OCI-LY7 (cell line): ENCODE measurements at regions of chr1 and their contacts with region 1.

Region 1: DNA sequence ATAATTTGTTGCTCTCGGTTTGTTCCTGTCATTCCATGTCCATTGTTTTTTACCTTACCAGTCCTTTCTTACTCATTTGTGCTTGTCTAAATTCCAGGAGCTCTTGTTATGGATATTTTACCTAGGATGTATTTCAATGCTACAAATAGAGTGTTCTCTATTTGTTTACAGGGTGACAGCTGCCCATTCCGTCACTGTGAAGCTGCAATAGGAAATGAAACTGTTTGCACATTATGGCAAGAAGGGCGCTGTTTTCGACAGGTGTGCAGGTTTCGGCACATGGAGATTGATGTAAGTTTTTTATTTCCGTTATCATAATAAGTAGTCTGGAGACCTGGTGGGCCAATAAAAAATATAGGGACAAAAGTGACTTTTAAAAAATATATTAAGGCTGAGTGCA is 23.0 kb downstream of the ZBED6 start:
- DNase-seq: peak; percentile 89
- H3K4me3 ChIP-seq: peak overlapping the region; percentile 47
- H3K27ac ChIP-seq: peak overlapping the region; percentile 93
- H3K4me1 ChIP-seq: peaks cover 39% of the 10 kb centered on the region
- CTCF ChIP-seq: peak; percentile 32; the same call in 1 of the 2 replicates

Region 2: DNA sequence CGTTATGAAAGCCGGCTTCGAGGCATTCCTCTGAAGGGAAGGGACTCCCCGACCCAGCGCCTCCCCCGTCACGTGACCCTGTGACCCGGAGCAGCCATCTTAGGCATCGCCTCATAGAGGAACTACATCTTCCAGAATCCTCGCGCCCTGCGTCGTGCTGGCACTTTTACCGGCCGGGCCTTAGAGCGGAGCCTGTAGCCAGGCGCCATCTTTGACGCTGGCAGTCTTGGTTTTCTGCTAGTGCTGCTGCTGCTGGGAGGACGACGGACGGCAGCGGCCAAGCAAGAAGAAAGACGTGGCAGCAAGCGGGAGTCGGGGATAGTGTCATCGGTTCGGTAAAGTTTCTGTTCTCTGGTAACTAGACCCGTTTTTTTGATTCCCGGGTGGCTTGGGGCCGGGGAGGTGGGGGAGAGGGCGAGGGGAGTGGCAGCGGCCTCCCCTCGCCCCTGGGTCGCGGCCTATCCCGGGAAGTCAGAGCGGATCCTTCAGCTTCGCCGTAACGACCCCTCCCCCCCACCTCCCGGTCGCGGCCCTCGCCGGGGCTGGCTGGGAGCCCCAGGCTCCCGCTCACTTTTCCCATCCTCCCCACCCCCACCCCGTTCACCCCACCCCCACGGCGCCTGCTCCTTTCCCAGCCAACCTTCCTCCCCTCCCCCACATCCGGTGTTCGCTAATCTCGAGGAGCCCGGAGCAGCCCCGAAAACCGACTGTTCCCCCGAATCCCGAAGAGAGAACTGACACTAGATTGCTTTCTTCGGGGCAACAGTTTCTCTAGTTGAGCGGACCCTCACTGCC is 22.8 kb before region 1 on chr1 and contains the starts of genes ZBED6 and ZC3H11A:
- CTCF ChIA-PET with region 1: no interaction called
- POLR2A ChIA-PET with region 1: interaction called, 7 read pairs
- intact Hi-C with region 1: loop called (anchors 1 kb)
- DNase-seq: peak; percentile 99
- H3K4me3 ChIP-seq: peak within 1 kb of the TSS; percentile 90
- H3K27ac ChIP-seq: peak within 1 kb of the TSS; percentile 70
- H3K4me1 ChIP-seq: peaks cover 51% of the 10 kb centered on the region
- CTCF ChIP-seq: no peak
- total RNA-seq, gene ZBED6: 9.1 and 12.2 TPM in 2 replicates
- total RNA-seq, gene ZC3H11A: 143 and 150 TPM in 2 replicates

Region 3: DNA sequence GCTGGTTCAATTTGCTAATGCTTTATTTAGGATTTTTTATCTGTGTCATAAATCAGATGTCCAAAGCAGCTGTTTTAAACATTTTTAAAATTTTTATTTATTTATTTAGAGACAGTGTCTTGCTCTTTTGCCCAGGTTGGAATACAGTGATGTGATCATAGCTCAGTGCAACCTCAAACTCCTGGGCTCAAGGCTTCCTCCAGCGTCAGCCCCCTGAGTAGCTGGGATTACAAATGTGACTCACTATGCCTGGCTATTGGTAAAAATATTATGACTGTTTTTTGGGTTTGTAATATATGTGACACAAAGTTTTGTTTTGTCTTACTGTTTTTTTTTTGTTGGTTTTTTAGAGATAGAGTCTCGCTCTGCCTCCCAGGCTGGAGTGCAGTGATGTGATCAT is 11.2 kb before region 1 on chr1:
- CTCF ChIA-PET with region 1: no interaction called
- POLR2A ChIA-PET with region 1: interaction called, 10 read pairs
- intact Hi-C with region 1: no loop called
- DNase-seq: no peak
- H3K4me3 ChIP-seq: no peak overlapping the region
- H3K27ac ChIP-seq: no peak overlapping the region
- H3K4me1 ChIP-seq: no peaks in the 10 kb centered on the region
- CTCF ChIP-seq: no peak

Region 4: DNA sequence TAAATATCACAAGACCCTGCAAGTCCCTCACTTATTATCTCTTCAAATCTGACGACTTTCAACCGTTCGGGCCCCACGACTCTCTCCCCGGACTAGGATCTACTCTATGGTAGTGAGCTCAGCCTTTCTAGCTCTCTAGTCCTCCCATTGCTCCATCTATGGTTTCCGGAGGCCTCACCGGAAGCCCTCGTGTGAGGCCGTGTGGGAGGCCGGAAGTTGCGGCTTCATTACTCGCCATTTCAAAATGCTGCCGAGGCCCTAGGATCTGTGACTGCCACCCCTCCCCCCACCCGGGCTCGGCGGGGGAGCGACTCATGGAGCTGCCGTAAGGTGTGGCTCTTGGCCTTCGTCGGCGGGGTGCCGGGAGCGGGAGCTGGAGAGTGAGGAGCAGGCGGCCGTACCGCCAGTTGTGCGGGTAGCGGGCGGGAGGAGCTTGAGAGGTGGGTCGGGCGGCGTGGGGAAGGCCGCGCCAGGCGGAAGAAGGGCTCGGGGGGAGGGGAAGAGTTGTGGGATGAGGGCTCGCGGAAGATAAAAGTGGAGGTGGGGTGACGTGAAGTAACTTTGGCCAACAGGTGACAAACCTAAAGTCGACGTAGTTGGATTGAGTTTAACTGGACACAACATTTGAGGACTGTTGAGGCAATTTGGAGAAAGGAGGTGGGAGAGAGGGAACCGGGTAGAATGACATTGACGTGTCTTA is 697.9 kb after region 1 on chr1 and contains the start of gene MDM4:
- CTCF ChIA-PET with region 1: no interaction called
- POLR2A ChIA-PET with region 1: no interaction called
- intact Hi-C with region 1: no loop called
- DNase-seq: peak; percentile 98
- H3K4me3 ChIP-seq: peak within 1 kb of the TSS; percentile 88
- H3K27ac ChIP-seq: peak within 1 kb of the TSS; percentile 100
- H3K4me1 ChIP-seq: peaks cover 85% of the 10 kb centered on the region
- CTCF ChIP-seq: no peak
- total RNA-seq, gene MDM4: 102 and 120 TPM in 2 replicates